PC-3 (cell line): ENCODE measurements at regions of chr3 and their contacts with region 1.

Region 1: DNA sequence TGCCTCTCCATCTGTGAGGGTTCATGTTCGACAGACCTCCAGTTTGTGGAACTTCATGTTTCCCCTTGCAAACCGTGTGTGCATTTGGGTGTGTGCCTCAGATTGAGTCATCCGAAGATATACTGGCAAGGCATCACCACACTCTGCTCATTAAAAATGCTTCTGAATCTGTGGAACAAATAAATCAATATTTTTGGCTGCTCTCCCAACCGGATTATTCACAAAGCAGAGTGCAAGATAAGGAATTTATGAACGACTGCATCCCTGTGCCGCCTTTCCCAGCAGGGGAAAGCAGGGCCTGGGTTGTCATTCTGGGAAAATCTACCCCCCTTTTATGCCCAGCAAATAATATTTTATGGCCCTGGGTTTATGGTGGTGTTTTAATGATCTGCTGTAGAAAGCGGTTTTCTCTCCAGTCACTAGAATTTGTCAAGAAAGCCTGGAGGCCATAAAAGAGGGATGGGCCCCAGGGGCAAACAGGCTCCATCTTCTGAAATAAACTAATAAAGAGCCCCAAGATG is 4.2 kb upstream of the WNT5A start:
- DNase-seq: peak; percentile 99
- ATAC-seq: peak; percentile 25
- H3K4me3 ChIP-seq: no peak overlapping the region; the same call in 1 of the 2 replicates
- H3K27ac ChIP-seq: peak overlapping the region; percentile 65
- H3K4me1 ChIP-seq: peaks cover 47% of the 10 kb centered on the region
- H3K27me3 ChIP-seq: no peaks in the 10 kb centered on the region
- CTCF ChIP-seq: no peak

Region 2: DNA sequence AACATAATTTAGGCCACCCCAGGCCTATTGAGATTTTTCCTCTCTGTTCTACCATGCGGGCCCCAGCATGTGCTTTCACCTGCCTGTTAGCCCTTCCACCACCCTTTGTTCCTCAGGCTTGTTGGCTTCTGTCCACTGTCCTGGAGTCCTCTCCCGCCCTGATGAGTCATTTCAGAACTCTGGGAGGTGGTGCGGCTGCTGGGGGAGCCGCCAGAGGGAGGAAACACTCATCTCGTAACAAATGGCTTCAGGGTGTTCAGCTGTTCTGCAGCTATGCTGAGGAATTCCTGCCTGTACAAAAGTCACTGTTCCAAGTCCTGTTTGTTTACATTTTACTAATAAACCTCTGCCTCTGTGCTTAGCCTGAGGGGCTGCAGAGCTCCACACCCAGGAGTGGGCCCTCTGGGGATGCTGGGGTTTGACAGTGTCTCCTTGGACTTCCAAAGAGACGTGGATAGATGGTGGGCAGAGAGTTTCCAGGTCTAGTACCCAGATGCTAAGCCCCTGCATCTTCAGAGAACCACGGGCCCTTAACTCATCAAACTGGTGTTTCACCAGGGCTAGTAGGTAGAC is 599.7 kb before region 1 on chr3:
- CTCF ChIA-PET with region 1: no interaction called
- POLR2A ChIA-PET with region 1: no interaction called
- intact Hi-C with region 1: loop called (anchors 2 kb)
- DNase-seq: peak; percentile 99
- ATAC-seq: peak; percentile 91
- H3K4me3 ChIP-seq: no peak overlapping the region; the same call in 1 of the 2 replicates
- H3K27ac ChIP-seq: peak overlapping the region; percentile 88
- H3K4me1 ChIP-seq: peaks cover 22% of the 10 kb centered on the region
- H3K27me3 ChIP-seq: no peaks in the 10 kb centered on the region
- CTCF ChIP-seq: peak; percentile 41; the same call in 1 of the 2 replicates

Region 3: GRCh38 chr3:55292360-55292759 is 199.0 kb before region 1 on chr3:
- CTCF ChIA-PET with region 1: no interaction called
- POLR2A ChIA-PET with region 1: no interaction called
- intact Hi-C with region 1: no loop called
- DNase-seq: no peak
- ATAC-seq: no peak
- H3K4me3 ChIP-seq: no peak overlapping the region
- H3K27ac ChIP-seq: no peak overlapping the region
- H3K4me1 ChIP-seq: no peaks in the 10 kb centered on the region
- H3K27me3 ChIP-seq: no peaks in the 10 kb centered on the region
- CTCF ChIP-seq: no peak

Region 4: DNA sequence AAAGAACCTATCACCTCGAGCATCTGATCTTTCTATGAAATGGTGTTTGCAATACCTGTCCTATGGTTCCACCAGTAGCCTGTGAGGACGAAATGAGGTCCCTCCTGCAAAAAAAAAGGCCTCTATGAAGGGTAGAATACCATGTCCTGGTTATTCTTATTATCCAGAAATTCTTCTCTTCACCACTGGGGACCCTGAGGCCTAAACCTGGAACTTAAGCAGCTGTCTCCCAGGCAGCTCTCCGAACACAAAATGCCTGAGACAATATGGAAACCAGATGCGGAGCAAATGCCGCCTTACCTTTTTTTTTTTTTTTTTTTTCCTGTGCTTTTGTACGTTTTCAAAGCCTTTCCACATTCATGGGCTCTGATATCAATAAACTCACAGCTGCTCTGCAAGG is 57.8 kb after region 1 on chr3:
- CTCF ChIA-PET with region 1: interaction called, 4 read pairs
- POLR2A ChIA-PET with region 1: no interaction called
- intact Hi-C with region 1: loop called (anchors 2 kb)
- DNase-seq: peak; percentile 29
- ATAC-seq: peak; percentile 76
- H3K4me3 ChIP-seq: no peak overlapping the region
- H3K27ac ChIP-seq: no peak overlapping the region
- H3K4me1 ChIP-seq: peaks cover 2% of the 10 kb centered on the region; the same call in 1 of the 2 replicates
- H3K27me3 ChIP-seq: no peaks in the 10 kb centered on the region
- CTCF ChIP-seq: peak; percentile 36; the same call in 1 of the 2 replicates

Region 5: DNA sequence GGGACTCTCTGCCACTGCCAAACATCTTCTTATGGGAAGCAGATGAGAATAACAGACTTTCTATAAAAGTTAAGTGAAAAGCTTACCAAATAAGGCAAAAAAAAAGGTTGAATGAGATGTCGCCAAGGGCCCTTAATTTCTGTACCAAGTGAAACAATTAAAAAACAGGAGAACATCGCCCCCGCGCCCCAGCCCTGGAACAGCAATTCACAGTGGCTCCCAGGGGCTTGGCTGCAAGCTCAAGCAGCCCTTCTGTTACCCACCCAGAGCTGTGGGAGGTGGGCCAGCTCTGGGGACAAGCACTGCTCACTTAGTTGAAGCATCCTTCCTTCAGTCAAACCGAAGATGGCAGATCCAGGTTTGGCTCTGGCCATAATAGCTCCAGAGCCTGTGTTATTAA is 768.9 kb after region 1 on chr3:
- CTCF ChIA-PET with region 1: no interaction called
- POLR2A ChIA-PET with region 1: no interaction called
- intact Hi-C with region 1: no loop called
- DNase-seq: no peak
- ATAC-seq: no peak
- H3K4me3 ChIP-seq: no peak overlapping the region
- H3K27ac ChIP-seq: no peak overlapping the region
- H3K4me1 ChIP-seq: no peaks in the 10 kb centered on the region
- H3K27me3 ChIP-seq: peaks cover 14% of the 10 kb centered on the region; the same call in 1 of the 2 replicates
- CTCF ChIP-seq: no peak